ENCODE measurements at regions of chr2 and their contacts with region 1.

Region 1: DNA sequence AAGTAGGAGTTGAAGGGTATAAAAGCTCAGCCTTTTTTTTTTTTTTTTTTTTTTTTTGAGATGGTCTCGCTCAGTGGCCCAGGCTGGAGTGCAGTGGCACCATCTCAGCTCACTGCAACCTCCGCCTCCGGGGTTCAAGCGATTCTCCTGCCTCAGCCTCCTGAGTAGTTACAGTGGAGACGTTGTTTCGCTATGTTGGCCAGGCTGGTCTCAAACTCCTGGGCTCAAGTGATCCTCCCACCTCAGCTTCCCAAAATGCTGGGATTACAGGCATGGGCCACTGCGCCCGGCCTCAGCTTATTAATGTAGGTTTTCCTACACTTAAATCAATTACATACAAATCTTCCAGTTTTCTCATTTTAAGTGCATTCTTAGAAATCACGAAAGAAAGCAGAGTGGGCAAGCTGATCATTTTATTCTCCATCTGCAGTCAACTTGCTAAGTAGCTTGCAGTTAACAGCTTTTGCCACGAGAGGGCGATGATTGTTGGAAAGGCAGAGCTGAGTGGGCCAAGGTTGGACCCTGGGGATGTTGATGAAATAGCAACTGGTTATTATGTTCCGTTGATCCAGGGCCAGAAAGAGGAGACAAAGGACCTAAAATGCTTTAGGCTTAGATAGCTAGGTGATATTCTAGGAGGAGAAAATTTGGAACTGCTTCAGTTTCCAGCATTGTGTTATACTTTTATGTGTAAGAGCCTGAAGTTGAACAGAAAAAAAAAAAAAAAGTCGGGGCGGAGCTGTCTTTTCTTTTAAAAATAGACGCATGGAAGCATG is 234.4 kb upstream of the EPAS1 start:
- DNase-seq: no peak
- H3K4me3 ChIP-seq: no peak overlapping the region
- CTCF ChIP-seq: peak; percentile 78

Region 2: DNA sequence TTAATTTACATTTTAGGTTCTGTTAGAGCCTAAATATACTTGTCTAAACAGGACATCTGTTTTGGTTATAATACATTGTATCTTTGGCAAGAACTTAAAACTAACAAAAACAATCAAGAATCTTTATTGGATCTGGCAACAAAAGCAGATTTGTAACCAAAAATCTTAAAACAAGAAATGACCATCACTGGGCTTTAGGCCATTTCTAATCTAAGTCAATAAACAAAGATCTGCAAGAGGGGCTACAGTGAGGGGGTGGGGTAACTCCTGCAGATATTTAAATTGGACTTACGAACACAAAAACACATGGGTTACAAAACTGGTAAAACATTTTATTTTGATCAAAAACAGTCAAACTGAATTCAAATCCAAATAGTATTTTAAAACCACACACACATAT is 529.1 kb before region 1 on chr2:
- CTCF ChIA-PET with region 1: no interaction called
- POLR2A ChIA-PET with region 1: no interaction called
- DNase-seq: peak; percentile 12
- H3K4me3 ChIP-seq: no peak overlapping the region
- CTCF ChIP-seq: no peak

Region 3: DNA sequence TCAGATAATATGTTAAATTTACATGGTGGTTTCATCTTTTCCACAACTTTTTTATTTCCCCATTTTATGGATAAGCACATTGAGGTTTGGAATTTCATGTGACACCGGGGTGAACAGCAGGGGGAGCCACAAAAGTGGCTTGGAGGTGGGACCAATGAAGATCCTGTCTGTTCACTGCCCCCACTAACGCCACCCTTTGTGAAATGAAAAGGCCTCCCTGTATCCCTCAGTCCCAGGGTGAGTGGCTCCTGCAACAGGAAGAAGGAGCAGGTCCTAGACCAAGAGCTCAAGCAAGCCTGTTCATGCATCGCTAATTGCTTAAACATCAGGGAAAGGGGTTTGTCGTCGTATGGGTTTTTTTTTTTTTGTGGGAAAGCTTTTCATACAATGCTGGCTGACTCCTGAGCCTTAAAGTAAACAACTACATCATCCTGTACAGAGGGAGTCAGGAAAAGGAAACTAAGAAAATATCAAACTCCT is 33.5 kb before region 1 on chr2:
- CTCF ChIA-PET with region 1: interaction called, 12 read pairs
- POLR2A ChIA-PET with region 1: no interaction called
- DNase-seq: no peak
- H3K4me3 ChIP-seq: no peak overlapping the region
- CTCF ChIP-seq: no peak

Region 4: DNA sequence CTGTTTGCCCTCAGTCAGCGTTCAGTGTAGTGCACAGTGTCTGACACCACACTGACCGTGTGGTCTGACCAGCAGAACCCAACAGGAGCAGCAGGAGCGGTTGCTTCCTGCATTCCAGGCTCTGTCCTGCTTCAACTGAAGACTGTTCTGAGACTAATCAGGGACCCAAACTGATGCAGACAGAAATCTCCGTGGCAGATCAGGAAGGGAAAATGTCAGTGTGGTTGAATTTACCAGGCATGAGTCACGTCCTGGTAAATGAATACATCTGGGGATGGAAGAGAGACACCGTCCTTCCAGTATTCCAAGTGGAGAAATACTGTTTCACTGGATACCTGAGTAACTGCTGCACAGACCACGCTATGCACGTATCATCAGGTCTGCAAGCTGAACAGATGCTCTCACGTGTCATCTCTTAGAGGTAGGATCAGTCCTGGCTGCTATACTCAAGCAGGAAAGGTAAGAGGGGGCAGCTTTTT is 10.8 kb after region 1 on chr2:
- CTCF ChIA-PET with region 1: interaction called, 16 read pairs
- POLR2A ChIA-PET with region 1: interaction called, 4 read pairs
- DNase-seq: peak; percentile 93
- H3K4me3 ChIP-seq: peak overlapping the region; percentile 48
- CTCF ChIP-seq: no peak

Region 5: GRCh38 chr2:46130511-46130910 is 67.7 kb after region 1 on chr2:
- CTCF ChIA-PET with region 1: interaction called, 11 read pairs
- POLR2A ChIA-PET with region 1: no interaction called
- DNase-seq: no peak
- H3K4me3 ChIP-seq: no peak overlapping the region
- CTCF ChIP-seq: no peak

Region 6: GRCh38 chr2:46296840-46297545 is 234.2 kb after region 1 on chr2 and contains the start of gene EPAS1:
- CTCF ChIA-PET with region 1: interaction called, 27 read pairs
- POLR2A ChIA-PET with region 1: interaction called, 17 read pairs
- DNase-seq: no peak
- H3K4me3 ChIP-seq: peak within 1 kb of the TSS; percentile 83
- CTCF ChIP-seq: no peak

Region 7: GRCh38 chr2:46318579-46319460 is 256.0 kb after region 1 on chr2:
- CTCF ChIA-PET with region 1: interaction called, 11 read pairs
- POLR2A ChIA-PET with region 1: no interaction called
- DNase-seq: no peak
- H3K4me3 ChIP-seq: no peak overlapping the region
- CTCF ChIP-seq: no peak

Region 8: DNA sequence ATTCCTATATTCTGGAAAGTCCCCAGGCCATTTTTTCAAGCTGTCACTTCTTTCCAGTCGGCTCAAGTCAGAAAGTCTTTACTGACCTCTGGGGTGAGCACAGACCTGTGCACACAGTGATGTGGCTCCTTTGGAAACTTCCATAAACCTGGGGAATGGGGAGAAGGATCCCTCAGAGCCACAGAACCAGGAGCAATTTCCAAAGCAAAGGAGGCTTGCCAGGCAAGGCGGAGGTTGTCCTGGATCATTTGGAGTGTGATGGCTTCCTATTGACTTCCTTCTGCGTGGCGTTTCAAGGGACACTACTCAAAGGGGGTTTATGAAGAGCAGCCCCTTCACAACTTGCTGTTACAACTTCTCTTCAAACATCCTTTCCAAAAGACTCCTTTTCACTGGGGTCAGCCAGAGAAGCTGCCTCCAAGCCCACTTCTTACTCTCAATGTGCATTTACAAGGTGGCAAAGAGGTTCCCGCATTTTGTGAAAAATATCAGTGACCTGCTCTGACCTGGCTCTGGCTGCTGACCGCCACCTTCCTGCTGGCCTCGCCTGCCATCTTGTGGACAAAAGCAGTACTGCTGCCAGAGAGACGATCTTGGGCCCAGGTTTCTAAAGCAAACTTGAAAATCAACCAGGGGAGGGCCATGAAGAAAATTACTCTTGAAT is 398.3 kb after region 1 on chr2:
- CTCF ChIA-PET with region 1: interaction called, 22 read pairs
- POLR2A ChIA-PET with region 1: no interaction called
- DNase-seq: no peak
- H3K4me3 ChIP-seq: no peak overlapping the region
- CTCF ChIP-seq: peak; percentile 94